ENCODE measurements at regions of chr11 and their contacts with region 1.

Region 1: DNA sequence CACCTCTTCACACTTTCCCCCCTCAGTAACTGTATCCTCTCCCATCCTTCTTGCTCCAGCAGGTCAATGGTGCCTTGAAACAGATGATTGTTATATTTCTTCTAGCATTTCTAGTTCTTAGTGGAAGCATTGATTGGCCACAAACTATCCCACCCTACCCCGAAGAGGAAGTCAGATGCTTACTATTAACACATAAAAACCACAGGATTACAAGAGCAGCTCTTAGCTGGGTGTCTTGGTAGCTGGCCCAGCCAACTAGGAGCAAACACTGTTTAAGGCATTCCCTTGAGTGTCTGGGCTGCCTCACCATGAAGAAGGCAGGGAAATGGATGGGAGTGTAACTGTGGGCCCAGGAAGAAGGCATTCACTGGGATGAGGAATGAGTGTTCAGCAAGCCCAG is 176.6 kb downstream of the GRIK4 start:
- DNase-seq: no peak
- ATAC-seq: no peak
- H3K4me3 Mint-ChIP-seq: no peak overlapping the region
- H3K27ac Mint-ChIP-seq: no peak overlapping the region
- H3K4me1 Mint-ChIP-seq: no peaks in the 10 kb centered on the region
- H3K27me3 Mint-ChIP-seq: peaks cover 34% of the 10 kb centered on the region

Region 2: DNA sequence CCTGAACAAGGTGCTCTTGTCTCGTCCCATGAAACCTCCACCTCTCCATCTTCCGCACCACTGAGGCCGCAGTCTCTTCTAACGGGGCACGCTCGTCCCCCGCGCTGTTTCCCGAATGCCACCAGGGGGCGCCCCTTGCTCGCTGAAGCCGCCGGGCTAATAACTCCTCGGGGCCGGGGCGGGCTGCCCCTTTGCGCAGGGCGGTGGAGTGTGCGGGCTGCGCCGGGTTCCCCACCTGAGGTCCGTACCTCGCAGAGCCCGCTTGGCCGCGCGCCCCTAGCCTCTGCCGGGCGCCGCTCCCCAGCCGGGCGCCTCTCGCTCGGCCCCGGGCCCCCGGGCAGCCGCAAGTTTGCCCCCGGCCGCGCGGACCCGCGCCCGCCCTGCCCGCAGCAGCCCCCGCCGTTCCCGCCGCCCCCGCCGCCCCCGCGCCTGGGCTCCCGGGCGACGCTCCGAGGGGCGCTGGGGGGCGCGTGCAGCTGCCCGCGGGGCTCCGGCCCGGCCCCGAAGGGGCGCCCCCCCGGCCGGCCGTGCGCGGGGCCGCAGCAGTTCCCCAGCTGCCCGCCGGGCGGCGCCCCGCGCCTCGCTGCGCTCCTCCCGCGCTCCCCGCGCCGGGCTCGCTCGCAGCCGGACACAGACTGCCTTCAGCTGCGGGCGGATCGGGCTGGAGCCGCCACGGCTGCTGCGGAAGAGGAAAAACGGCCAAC is 176.9 kb before region 1 on chr11 and contains the start of gene GRIK4:
- CTCF ChIA-PET with region 1: interaction called, 44 read pairs
- DNase-seq: peak; percentile 81
- ATAC-seq: peak; percentile 92
- H3K4me3 Mint-ChIP-seq: no peak within 1 kb of the TSS
- H3K27ac Mint-ChIP-seq: no peak within 1 kb of the TSS
- H3K4me1 Mint-ChIP-seq: no peaks in the 10 kb centered on the region
- H3K27me3 Mint-ChIP-seq: peaks cover 66% of the 10 kb centered on the region
- total RNA-seq, gene GRIK4: 0.21 TPM in 1 of 2 experiments, not detected in the other

Region 3: GRCh38 chr11:120569861-120570260 is 118.3 kb before region 1 on chr11:
- CTCF ChIA-PET with region 1: no interaction called
- DNase-seq: no peak
- ATAC-seq: no peak
- H3K4me3 Mint-ChIP-seq: no peak overlapping the region
- H3K27ac Mint-ChIP-seq: no peak overlapping the region
- H3K4me1 Mint-ChIP-seq: peaks cover 8% of the 10 kb centered on the region
- H3K27me3 Mint-ChIP-seq: peaks cover 25% of the 10 kb centered on the region

Region 4: GRCh38 chr11:120839846-120840402 is 151.8 kb after region 1 on chr11:
- CTCF ChIA-PET with region 1: no interaction called
- DNase-seq: no peak
- ATAC-seq: no peak
- H3K4me3 Mint-ChIP-seq: no peak overlapping the region
- H3K27ac Mint-ChIP-seq: no peak overlapping the region
- H3K4me1 Mint-ChIP-seq: peaks cover 5% of the 10 kb centered on the region
- H3K27me3 Mint-ChIP-seq: peaks cover 16% of the 10 kb centered on the region